ENCODE measurements at regions of chr20 and their contacts with region 1.

Region 1: DNA sequence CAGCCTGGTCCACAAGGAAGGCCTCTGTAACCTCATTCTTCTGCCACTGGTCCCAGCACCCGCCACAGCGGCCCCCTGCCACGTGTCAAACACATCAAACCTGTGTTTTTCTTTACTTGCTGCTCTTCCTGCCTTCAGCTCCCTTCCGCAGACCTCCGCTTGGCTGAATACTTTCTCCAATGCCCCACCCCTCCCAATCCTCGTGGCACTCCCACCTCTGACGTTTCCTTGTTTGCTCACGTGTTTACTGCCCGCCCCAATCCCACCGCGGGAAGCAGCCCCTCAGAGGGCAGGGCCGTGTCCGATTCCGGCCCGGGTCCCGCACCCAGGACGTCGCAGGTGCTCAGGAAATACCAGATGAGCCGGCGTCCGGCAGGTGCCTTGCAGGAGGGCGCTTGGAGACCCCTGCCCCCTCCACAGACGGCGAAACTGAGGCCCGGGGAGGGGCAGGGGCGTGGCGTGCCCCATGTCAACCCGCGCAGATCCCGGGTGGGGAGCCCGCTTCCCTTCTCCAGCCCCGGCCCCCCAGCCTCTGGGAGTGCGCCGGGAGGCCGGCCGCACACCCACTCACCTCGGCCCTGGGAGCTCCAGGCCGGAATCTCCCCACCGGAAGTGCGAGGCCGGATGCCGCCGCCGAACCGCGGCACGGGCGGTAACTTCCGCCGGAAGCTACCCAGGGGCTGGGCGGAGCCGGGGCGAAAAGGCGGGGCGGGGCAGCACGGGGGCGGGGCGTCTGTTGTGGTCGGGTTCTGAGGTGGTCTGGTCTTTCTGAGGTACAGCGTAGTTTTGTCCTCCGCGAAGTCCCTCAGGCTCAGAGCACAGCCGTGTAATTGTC is 42.4 kb downstream of the ELMO2 start:
- DNase-seq: peak; percentile 96
- ATAC-seq: peak; percentile 95
- H3K4me3 ChIP-seq: peak overlapping the region; percentile 83 to 95 (median 94)
- H3K27ac ChIP-seq: peak overlapping the region; percentile 94
- H3K4me1 ChIP-seq: peaks cover 31% of the 10 kb centered on the region
- H3K27me3 ChIP-seq: no peaks in the 10 kb centered on the region; a peak in 1 of 5 replicates
- CTCF ChIP-seq: no peak
- EP300 ChIP-seq: no peak; a peak in 1 of 4 replicates
- POLR2A ChIP-seq: peak; percentile 87 to 93
- RAD21 ChIP-seq: peak; percentile 85

Region 2: GRCh38 chr20:45798935-45799642 is 564.9 kb before region 1 on chr20:
- CTCF ChIA-PET with region 1: no interaction called
- POLR2A ChIA-PET with region 1: no interaction called
- in situ Hi-C with region 1: loop called (anchors 25 kb)
- intact Hi-C with region 1: no loop called
- DNase-seq: peak; percentile 61
- ATAC-seq: peak; percentile 97
- H3K4me3 ChIP-seq: no peak overlapping the region
- H3K27ac ChIP-seq: no peak overlapping the region
- H3K4me1 ChIP-seq: no peaks in the 10 kb centered on the region
- H3K27me3 ChIP-seq: no peaks in the 10 kb centered on the region
- CTCF ChIP-seq: peak; percentile 94
- EP300 ChIP-seq: no peak
- POLR2A ChIP-seq: no peak; a peak in 1 of 4 replicates
- RAD21 ChIP-seq: peak; percentile 71

Region 3: DNA sequence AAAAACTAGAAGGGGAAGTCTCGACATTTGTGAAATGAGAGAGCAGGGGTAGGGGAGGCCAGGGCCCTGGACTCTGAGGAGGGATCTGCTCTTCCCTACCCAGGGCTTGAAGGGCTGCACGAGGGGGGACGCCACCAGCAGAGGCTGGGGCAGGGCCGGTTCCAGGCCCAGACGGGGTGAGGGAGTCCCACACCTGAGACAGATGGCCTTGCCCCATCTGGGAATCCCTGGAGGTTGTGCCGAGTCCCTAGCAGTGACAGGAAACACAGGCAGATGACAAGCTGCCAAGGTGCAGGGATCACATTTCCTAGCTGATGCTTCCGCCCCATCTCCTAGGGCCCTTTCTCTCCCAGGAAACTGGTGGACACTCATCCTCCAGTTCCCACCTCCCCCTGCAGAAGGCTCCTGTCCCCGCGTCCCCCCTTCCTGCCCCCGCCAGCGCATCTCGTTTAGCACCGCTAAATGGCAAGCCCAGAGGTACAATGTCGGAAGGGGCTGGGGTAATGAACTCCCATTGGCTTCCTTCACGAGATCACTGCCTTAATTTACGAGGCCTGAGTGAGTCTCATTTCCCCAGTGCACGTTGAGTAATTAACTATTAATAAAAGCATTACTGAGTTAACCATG is 20.6 kb before region 1 on chr20:
- CTCF ChIA-PET with region 1: no interaction called
- POLR2A ChIA-PET with region 1: interaction called, 37 read pairs
- in situ Hi-C with region 1: no loop called
- intact Hi-C with region 1: no loop called
- DNase-seq: no peak
- ATAC-seq: peak; percentile 51
- H3K4me3 ChIP-seq: peak overlapping the region in 1 of 3 experiments; percentile 23; a peak in 1 of 6 replicates
- H3K27ac ChIP-seq: no peak overlapping the region
- H3K4me1 ChIP-seq: peaks cover 15% of the 10 kb centered on the region
- H3K27me3 ChIP-seq: peaks cover 10 to 36% of the 10 kb centered on the region in 2 experiments; a peak in 4 of 5 replicates
- CTCF ChIP-seq: no peak
- EP300 ChIP-seq: no peak
- POLR2A ChIP-seq: peak in 1 of 2 experiments; percentile 24; a peak in 2 of 4 replicates
- RAD21 ChIP-seq: no peak

Region 4: GRCh38 chr20:46349035-46349741 is 14.8 kb before region 1 on chr20:
- CTCF ChIA-PET with region 1: no interaction called
- POLR2A ChIA-PET with region 1: interaction called, 37 read pairs
- in situ Hi-C with region 1: no loop called
- intact Hi-C with region 1: no loop called
- DNase-seq: peak; percentile 46
- ATAC-seq: peak; percentile 58
- H3K4me3 ChIP-seq: no peak overlapping the region
- H3K27ac ChIP-seq: no peak overlapping the region
- H3K4me1 ChIP-seq: peaks cover 39% of the 10 kb centered on the region
- H3K27me3 ChIP-seq: no peaks in the 10 kb centered on the region
- CTCF ChIP-seq: peak; percentile 96
- EP300 ChIP-seq: no peak
- POLR2A ChIP-seq: no peak
- RAD21 ChIP-seq: peak; percentile 87

Region 5: GRCh38 chr20:46375771-46376170 is 11.8 kb after region 1 on chr20:
- CTCF ChIA-PET with region 1: no interaction called
- POLR2A ChIA-PET with region 1: interaction called, 29 read pairs
- in situ Hi-C with region 1: no loop called
- intact Hi-C with region 1: no loop called
- DNase-seq: no peak
- ATAC-seq: no peak
- H3K4me3 ChIP-seq: no peak overlapping the region
- H3K27ac ChIP-seq: no peak overlapping the region
- H3K4me1 ChIP-seq: peaks cover 23% of the 10 kb centered on the region
- H3K27me3 ChIP-seq: no peaks in the 10 kb centered on the region
- CTCF ChIP-seq: no peak
- EP300 ChIP-seq: no peak
- POLR2A ChIP-seq: 0 out of 4 replicates have a peak, but pooled peaks of 1 of the 2 experiments have one; percentile 22
- RAD21 ChIP-seq: no peak

Region 6: GRCh38 chr20:46406199-46406985 is 42.4 kb after region 1 on chr20 and contains the start of gene ELMO2:
- CTCF ChIA-PET with region 1: no interaction called
- POLR2A ChIA-PET with region 1: interaction called, 7 read pairs
- in situ Hi-C with region 1: no loop called
- intact Hi-C with region 1: loop called (anchors 1 kb)
- DNase-seq: peak; percentile 99
- ATAC-seq: peak; percentile 91
- H3K4me3 ChIP-seq: peak within 1 kb of the TSS; percentile 90 to 98 (median 93)
- H3K27ac ChIP-seq: peak within 1 kb of the TSS; percentile 79
- H3K4me1 ChIP-seq: peaks cover 79% of the 10 kb centered on the region
- H3K27me3 ChIP-seq: no peaks in the 10 kb centered on the region; a peak in 1 of 5 replicates
- CTCF ChIP-seq: peak; percentile 22
- EP300 ChIP-seq: peak in 1 of 2 experiments; percentile 17; a peak in 1 of 4 replicates
- POLR2A ChIP-seq: peak; percentile 53 to 64
- RAD21 ChIP-seq: no peak
- total RNA-seq, gene ELMO2: 35.7 and 42.8 TPM in 2 replicates

Measured in HepG2 (cell line).